PC-3 (cell line): ENCODE measurements at regions of chrX and their contacts with region 1.

Region 1: DNA sequence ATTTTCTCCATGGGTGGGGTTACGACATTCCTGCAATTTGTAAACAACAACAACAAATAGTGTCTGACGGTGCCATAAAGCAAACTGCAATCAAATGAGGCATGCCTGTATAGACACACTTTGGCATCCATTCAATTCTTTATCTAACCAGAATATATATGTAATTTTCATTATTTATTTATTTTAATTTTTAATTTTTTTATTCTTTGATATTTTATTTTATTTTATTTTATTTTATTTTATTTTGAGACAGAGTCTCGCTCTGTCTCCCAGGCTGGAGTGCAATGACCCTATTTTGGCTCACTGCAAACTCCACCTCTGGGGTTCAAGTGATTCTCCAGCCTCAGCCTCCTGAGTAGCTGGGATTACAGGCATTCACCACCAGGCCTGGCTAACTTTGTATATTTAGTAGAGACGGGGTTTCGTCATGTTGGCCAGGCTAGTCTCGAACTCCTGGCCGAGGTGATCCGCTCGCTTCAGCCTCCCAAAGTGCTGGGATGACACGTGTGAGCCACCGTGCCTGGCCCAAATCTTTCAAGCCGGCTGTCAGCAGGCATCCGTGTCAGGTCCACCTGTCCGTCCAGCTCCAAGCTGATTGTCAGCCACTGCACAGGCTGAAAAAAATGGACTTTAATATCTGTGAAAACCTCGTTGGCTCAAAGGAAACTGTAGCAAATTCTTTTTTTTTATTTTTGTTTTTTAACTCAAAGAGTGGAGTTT is 200.8 kb downstream of the ASMT start:
- DNase-seq: no peak
- ATAC-seq: no peak
- H3K4me3 ChIP-seq: no peak overlapping the region
- H3K27ac ChIP-seq: no peak overlapping the region
- H3K4me1 ChIP-seq: no peaks in the 10 kb centered on the region
- H3K27me3 ChIP-seq: no peaks in the 10 kb centered on the region
- CTCF ChIP-seq: no peak

Region 2: DNA sequence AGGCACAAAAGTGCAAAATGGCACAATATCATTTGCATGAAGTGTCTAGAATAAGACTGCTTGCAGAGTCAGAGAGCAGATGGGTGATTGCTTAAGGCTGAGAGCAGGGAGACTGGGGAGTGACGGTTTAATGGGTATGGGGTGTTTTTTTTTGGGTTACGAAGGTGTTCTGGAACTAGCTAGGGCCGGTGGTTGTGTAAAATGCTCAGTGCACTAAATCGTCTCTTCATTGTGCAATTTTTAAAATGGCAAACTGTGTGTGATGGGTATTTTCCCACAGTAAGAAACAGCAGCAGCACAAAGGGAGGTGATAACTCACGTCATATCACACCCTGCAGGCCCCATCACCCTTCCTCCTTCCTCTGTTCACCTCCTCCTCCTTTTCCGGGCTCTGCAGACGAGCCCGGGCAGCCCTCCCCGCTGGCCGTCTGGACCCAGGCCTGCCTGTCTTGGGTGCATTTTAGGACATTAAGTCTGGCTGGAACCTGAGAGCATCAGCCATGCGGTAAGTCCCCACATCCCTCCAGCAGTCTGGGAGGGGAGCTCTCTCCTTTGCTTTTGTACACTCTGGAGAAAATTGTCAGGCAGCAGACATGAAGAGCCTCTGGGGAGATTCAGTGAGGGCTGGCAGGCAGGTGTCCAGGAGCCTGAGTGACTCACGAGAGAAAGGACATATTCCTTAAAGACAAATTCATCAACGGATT is 158.1 kb before region 1 on chrX:
- CTCF ChIA-PET with region 1: no interaction called
- POLR2A ChIA-PET with region 1: no interaction called
- intact Hi-C with region 1: loop called (anchors 1 kb)
- DNase-seq: peak; percentile 25
- ATAC-seq: peak; percentile 33
- H3K4me3 ChIP-seq: no peak overlapping the region
- H3K27ac ChIP-seq: no peak overlapping the region
- H3K4me1 ChIP-seq: no peaks in the 10 kb centered on the region
- H3K27me3 ChIP-seq: no peaks in the 10 kb centered on the region
- CTCF ChIP-seq: no peak

Region 3: GRCh38 chrX:1673337-1673736 is 142.3 kb before region 1 on chrX:
- CTCF ChIA-PET with region 1: no interaction called
- POLR2A ChIA-PET with region 1: no interaction called
- intact Hi-C with region 1: loop called (anchors 1 kb)
- DNase-seq: peak; percentile 54
- ATAC-seq: no peak
- H3K4me3 ChIP-seq: no peak overlapping the region
- H3K27ac ChIP-seq: no peak overlapping the region
- H3K4me1 ChIP-seq: no peaks in the 10 kb centered on the region
- H3K27me3 ChIP-seq: no peaks in the 10 kb centered on the region
- CTCF ChIP-seq: peak; percentile 77

Region 4: DNA sequence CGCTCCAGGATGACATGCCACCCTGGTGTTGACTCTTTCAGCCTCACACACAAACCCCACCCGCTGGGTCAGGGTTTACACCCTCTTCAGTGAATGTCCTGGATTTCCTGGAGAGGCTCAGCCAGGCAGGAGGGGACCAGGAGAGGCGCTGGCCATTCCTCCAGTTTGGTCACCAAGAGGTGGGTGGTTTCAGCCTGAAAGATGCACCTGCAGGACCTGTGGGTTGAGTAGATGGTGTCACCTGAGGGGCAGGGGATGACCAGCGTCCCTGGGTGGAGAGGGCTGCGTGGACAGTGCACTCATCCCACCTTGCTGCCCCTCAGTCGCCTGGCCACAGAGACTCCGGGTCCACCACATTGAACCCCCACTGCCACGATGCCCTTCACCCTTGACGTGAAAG is 21.0 kb before region 1 on chrX:
- CTCF ChIA-PET with region 1: no interaction called
- POLR2A ChIA-PET with region 1: no interaction called
- intact Hi-C with region 1: no loop called
- DNase-seq: no peak
- ATAC-seq: no peak
- H3K4me3 ChIP-seq: no peak overlapping the region
- H3K27ac ChIP-seq: no peak overlapping the region
- H3K4me1 ChIP-seq: peaks cover 7% of the 10 kb centered on the region
- H3K27me3 ChIP-seq: no peaks in the 10 kb centered on the region
- CTCF ChIP-seq: no peak